MCF 10A (cell line): ENCODE measurements at regions of chr1 and their contacts with region 1.

Region 1: GRCh38 chr1:156090822-156091188 is 8.5 kb upstream of the MEX3A start:
- DNase-seq: peak; percentile 95
- H3K4me3 Mint-ChIP-seq: no peak overlapping the region
- H3K27ac Mint-ChIP-seq: no peak overlapping the region
- H3K4me1 Mint-ChIP-seq: peaks cover 8% of the 10 kb centered on the region
- H3K27me3 Mint-ChIP-seq: no peaks in the 10 kb centered on the region
- CTCF ChIP-seq: peak; percentile 98

Region 2: DNA sequence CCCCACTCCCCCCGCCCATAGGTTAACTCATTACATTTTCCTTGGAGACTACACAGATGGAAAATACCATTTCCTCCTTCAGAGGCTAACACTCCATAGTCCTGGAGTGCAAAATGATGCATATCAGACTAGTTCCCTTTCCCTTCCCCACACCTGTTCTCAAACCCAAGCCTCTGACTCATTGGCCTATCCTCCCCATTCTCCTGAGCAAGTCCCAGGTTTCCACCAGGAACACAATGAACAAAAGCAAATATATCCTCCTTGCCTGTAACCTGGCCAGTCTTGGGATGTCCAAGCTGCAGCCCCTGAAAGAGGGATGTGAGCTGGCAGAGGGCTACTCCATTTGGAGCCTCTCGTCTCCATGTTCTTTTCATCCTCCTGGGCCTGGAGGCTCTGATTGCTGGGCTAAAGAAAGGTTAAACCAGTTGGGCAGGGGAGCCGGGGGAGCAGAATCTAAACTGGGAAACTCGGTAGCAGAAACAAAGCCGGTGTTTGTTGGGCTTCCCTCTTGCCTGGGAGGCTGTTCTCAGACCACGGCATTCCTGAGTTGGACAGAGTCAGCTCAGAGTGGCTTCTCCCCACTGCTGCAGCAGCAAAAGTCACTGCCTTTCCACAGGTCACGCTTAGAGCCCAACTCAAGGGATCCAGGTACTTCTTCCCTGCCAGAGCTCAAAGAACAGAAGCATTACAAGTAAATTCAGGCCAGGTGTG is 84.0 kb before region 1 on chr1:
- CTCF ChIA-PET with region 1: interaction called, 18 read pairs
- POLR2A ChIA-PET with region 1: interaction called, 3 read pairs
- intact Hi-C with region 1: no loop called
- DNase-seq: no peak
- H3K4me3 Mint-ChIP-seq: no peak overlapping the region
- H3K27ac Mint-ChIP-seq: peak overlapping the region; percentile 43
- H3K4me1 Mint-ChIP-seq: peaks cover 29% of the 10 kb centered on the region
- H3K27me3 Mint-ChIP-seq: no peaks in the 10 kb centered on the region
- CTCF ChIP-seq: no peak

Region 3: DNA sequence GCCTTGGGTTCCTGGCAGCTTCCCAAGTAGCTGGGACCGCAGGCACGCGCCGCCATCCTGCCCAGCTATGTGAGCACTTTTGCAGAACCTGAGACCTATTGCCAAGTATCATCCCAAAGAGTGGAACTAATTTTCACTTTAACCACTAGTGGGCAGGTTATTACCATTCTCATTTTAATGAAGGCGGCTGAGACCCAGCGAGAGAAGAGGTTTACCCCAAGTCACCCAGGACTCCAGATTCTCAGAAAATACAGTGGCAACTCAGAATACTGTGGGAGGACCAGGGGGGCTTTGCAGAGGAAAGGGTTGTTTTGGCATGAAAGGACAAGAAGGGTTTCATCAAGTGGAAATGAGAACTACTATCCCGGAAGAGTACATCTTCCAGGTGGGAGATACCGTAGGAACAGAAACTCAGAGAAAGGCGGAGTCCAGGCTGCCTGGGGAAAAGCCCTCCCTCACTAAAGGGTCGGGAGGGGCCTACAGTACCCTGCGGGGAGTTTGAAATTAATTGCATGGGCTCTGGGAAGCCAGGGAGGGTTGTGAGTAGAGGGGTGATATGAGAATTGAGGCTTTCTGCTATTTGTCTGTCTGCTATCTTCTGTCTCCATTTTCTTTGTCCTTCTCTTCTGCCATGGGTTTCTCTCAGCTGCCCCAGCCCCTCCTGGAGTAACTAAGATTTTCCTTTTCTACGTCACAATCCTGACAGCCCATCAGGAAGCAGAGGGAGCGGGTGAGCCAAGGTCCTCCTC is 55.4 kb after region 1 on chr1:
- CTCF ChIA-PET with region 1: interaction called, 1,892 read pairs
- POLR2A ChIA-PET with region 1: interaction called, 3 read pairs
- intact Hi-C with region 1: loop called (anchors 1 kb)
- DNase-seq: peak; percentile 97
- H3K4me3 Mint-ChIP-seq: peak overlapping the region; percentile 24
- H3K27ac Mint-ChIP-seq: no peak overlapping the region
- H3K4me1 Mint-ChIP-seq: peaks cover 29% of the 10 kb centered on the region
- H3K27me3 Mint-ChIP-seq: no peaks in the 10 kb centered on the region
- CTCF ChIP-seq: peak; percentile 60

Region 4: GRCh38 chr1:156165083-156165482 is 74.3 kb after region 1 on chr1:
- CTCF ChIA-PET with region 1: interaction called, 22 read pairs
- POLR2A ChIA-PET with region 1: no interaction called
- intact Hi-C with region 1: no loop called
- DNase-seq: no peak
- H3K4me3 Mint-ChIP-seq: no peak overlapping the region
- H3K27ac Mint-ChIP-seq: no peak overlapping the region
- H3K4me1 Mint-ChIP-seq: peaks cover under 1% of the 10 kb centered on the region
- H3K27me3 Mint-ChIP-seq: peaks cover 18% of the 10 kb centered on the region
- CTCF ChIP-seq: no peak

Region 5: GRCh38 chr1:156172696-156173470 is 82.1 kb after region 1 on chr1:
- CTCF ChIA-PET with region 1: interaction called, 12 read pairs
- POLR2A ChIA-PET with region 1: no interaction called
- intact Hi-C with region 1: no loop called
- DNase-seq: no peak
- H3K4me3 Mint-ChIP-seq: no peak overlapping the region
- H3K27ac Mint-ChIP-seq: no peak overlapping the region
- H3K4me1 Mint-ChIP-seq: no peaks in the 10 kb centered on the region
- H3K27me3 Mint-ChIP-seq: peaks cover 30% of the 10 kb centered on the region
- CTCF ChIP-seq: no peak